Activated CD4-positive, alpha-beta T cell treated with anti-CD3 and anti-CD28 coated beads, Interleukin-2, amount 10 ng/mL, durations not matched to agents 24 days and 14 days (primary cell): ENCODE measurements at regions of chr12 and their contacts with region 1.

Region 1: GRCh38 chr12:46546634-46547286 is 174.2 kb upstream of the SLC38A2 start:
- DNase-seq: peak; percentile 79
- H3K4me3 Mint-ChIP-seq: peak overlapping the region; percentile 55
- H3K27ac Mint-ChIP-seq: peak overlapping the region; percentile 88
- H3K4me1 Mint-ChIP-seq: peaks cover 62% of the 10 kb centered on the region
- H3K27me3 Mint-ChIP-seq: no peaks in the 10 kb centered on the region

Region 2: DNA sequence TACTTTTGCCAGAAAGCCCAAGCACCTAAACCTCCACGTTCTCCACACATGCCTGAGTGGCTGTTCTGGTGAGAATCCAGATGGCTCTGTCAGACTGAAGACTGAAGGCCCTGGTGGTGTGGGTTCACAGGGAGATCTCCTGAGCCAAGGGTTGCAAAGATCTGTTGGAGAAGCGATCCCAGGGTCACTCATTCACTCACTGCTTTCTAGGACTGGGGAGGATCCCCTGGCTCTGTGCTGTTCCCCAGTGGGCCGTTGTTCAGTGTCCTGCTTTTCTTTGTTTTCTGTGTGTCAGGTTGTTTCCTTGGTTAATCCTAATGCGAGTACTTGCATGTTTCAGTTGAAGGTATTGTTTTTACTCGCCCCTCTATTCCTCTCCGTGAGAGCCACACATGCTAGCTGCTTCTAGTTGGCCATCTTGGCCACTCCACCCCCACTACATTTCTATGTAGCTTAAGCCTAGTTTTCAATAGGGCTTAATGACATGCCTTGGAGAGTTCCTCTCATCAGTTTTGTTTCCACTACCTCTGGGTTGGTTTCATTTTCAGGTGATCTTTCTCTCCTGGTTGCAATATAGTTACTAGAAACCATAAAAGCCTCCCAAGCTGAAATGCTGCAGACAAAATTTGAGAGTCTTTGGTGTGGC is 29.7 kb before region 1 on chr12:
- intact Hi-C with region 1: loop called (anchors 1 kb)
- DNase-seq: peak; percentile 83
- H3K4me3 Mint-ChIP-seq: peak overlapping the region; percentile 80
- H3K27ac Mint-ChIP-seq: peak overlapping the region; percentile 95
- H3K4me1 Mint-ChIP-seq: peaks cover 71% of the 10 kb centered on the region
- H3K27me3 Mint-ChIP-seq: no peaks in the 10 kb centered on the region

Region 3: DNA sequence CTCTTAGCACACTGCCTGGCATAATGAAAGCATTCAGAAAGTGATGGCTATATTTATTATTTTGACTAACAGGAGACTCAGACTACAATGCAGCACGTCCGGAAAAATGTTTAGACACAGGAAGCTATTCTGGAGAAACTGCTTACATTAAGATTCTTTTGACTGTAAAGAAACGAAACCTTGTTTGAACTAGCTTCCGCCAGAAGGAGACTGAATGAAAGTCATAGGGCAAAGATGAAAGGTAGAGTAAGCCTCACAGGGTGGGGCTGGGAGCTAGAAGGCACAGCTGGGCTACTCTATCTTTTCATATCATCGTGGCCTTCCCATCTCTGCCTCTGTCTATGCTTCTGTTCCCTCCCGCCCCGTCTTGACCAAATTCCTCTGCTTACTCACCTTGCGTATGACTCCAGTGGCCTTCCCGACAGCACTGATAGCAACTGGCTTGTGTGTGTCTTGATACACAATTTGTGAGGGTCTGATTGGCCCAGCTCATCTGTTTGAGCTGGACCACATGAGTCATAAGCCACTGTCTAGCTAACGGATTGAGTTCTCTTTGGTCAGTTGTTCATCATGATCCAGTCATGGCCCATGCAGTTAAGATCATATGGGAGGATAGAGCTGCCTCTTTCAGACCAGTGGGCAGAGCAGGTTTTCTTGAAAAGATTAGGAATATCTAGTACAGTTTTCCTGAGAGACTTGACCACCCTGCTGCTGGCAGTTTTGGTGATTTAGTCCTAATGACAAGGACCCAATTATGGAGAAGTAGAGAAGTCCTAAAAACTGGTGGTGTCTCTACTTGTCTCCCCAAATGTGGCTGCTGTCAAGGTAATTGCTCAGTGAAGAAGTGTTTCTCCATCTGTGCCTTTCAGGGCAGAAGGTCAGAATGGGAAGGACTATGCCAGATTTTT is 22.6 kb before region 1 on chr12:
- intact Hi-C with region 1: loop called (anchors 1 kb)
- DNase-seq: peak; percentile 87
- H3K4me3 Mint-ChIP-seq: peak overlapping the region; percentile 76
- H3K27ac Mint-ChIP-seq: peak overlapping the region; percentile 94
- H3K4me1 Mint-ChIP-seq: peaks cover 51% of the 10 kb centered on the region
- H3K27me3 Mint-ChIP-seq: no peaks in the 10 kb centered on the region